ENCODE measurements at regions of chr12 and their contacts with region 1.

Region 1: GRCh38 chr12:51923501-51924271 is 16.4 kb downstream of the ACVRL1 start:
- DNase-seq: peak; percentile 66 to 88 (median 71)
- ATAC-seq: peak; percentile 65 to 81 (median 76)
- H3K4me3 ChIP-seq: peak overlapping the region in 8 of 12 donors; percentile 5 to 43 (median 26)
- H3K27ac ChIP-seq: peak overlapping the region; percentile 51 to 92 (median 77)
- H3K4me1 ChIP-seq: peaks cover 0 to 47% (median 28%) of the 10 kb centered on the region in 12 donors
- H3K27me3 ChIP-seq: no peaks in the 10 kb centered on the region
- CTCF ChIP-seq: peak; percentile 83 to 97 (median 89)
- POLR2A ChIP-seq: peak in 1 of 2 donors; percentile 18

Region 2: DNA sequence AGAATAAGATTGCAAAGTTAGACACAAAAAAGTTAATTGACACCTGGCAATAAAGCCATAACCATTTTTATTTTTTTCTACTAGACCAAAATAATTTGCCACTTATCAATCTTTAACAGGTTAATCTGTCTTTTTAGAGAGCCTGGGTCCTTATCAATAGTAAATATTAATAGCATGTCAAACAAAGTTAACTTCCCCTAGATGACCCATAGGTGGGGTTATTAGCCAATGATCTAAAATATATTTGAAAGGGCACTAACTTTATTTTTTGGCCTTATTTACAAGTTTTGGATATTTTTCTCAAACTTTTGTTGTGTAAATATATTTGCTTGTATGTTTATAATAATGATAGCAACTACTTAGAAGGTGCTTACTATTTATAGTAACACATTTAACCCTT is 31.8 kb before region 1 on chr12:
- intact Hi-C with region 1: loop called in 6 of 10 experiments (anchors 2 to 5 kb)
- DNase-seq: no peak
- ATAC-seq: no peak
- H3K4me3 ChIP-seq: no peak overlapping the region
- H3K27ac ChIP-seq: no peak overlapping the region
- H3K4me1 ChIP-seq: peaks cover 3 to 29% (median 18%) of the 10 kb centered on the region in 12 donors
- H3K27me3 ChIP-seq: no peaks in the 10 kb centered on the region
- CTCF ChIP-seq: peak; percentile 23 to 55 (median 39)
- POLR2A ChIP-seq: no peak

Region 3: DNA sequence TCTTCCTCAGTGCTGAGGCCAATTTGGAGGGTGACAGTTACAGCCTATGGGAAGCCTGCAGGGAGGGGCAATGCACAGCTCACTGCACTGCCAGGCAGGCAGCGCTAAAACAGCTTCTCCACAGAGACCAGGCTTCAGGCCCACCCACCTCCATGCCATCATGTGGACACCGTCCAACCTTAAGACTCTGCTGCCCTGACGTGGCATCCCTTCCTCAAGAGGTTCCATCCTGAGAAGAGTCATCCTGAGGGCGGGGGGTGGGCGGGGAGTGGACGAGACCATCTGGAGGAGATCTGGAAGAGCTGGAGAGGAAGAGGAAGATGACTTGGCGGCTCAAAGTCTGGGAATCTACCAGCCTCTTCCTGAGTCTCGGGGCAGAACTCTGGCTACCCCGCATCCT is 24.7 kb before region 1 on chr12:
- intact Hi-C with region 1: loop called in 6 of 10 experiments (anchors 1 to 5 kb)
- DNase-seq: peak in 1 of 5 donors; percentile 37
- ATAC-seq: no peak
- H3K4me3 ChIP-seq: no peak overlapping the region
- H3K27ac ChIP-seq: peak overlapping the region in 2 of 12 donors; percentile 40 to 53
- H3K4me1 ChIP-seq: peaks cover 5 to 44% (median 31%) of the 10 kb centered on the region in 12 donors
- H3K27me3 ChIP-seq: no peaks in the 10 kb centered on the region
- CTCF ChIP-seq: no peak
- POLR2A ChIP-seq: no peak

Region 4: GRCh38 chr12:51970904-51971646 is 47.4 kb after region 1 on chr12:
- intact Hi-C with region 1: loop called in 2 of 10 experiments (anchors 5 to 10 kb)
- DNase-seq: no peak
- ATAC-seq: no peak
- H3K4me3 ChIP-seq: no peak overlapping the region
- H3K27ac ChIP-seq: peak overlapping the region in 1 of 12 donors; percentile 88
- H3K4me1 ChIP-seq: peaks cover 7 to 62% (median 32%) of the 10 kb centered on the region in 12 donors
- H3K27me3 ChIP-seq: no peaks in the 10 kb centered on the region
- CTCF ChIP-seq: peak in 5 of 12 donors; percentile 24 to 34 (median 28)
- POLR2A ChIP-seq: no peak

Measured in heart left ventricle (tissue), 16 donors.